ENCODE measurements at regions of chr19 and their contacts with region 1.

Region 1: GRCh38 chr19:53792721-53793433 is 31.2 kb downstream of the NLRP12 start:
- DNase-seq: peak; percentile 54 to 76 (median 67)
- ATAC-seq: peak; percentile 100
- H3K4me3 ChIP-seq: no peak overlapping the region
- H3K4me3 Mint-ChIP-seq: no peak overlapping the region
- H3K27ac ChIP-seq: no peak overlapping the region
- H3K27ac Mint-ChIP-seq: no peak overlapping the region
- H3K4me1 ChIP-seq: no peaks in the 10 kb centered on the region
- H3K4me1 Mint-ChIP-seq: peaks cover 0 to 2% (median 0%) of the 10 kb centered on the region in 7 donors
- H3K27me3 ChIP-seq: no peaks in the 10 kb centered on the region
- H3K27me3 Mint-ChIP-seq: peaks cover 0 to 4% (median 0%) of the 10 kb centered on the region in 5 donors

Region 2: DNA sequence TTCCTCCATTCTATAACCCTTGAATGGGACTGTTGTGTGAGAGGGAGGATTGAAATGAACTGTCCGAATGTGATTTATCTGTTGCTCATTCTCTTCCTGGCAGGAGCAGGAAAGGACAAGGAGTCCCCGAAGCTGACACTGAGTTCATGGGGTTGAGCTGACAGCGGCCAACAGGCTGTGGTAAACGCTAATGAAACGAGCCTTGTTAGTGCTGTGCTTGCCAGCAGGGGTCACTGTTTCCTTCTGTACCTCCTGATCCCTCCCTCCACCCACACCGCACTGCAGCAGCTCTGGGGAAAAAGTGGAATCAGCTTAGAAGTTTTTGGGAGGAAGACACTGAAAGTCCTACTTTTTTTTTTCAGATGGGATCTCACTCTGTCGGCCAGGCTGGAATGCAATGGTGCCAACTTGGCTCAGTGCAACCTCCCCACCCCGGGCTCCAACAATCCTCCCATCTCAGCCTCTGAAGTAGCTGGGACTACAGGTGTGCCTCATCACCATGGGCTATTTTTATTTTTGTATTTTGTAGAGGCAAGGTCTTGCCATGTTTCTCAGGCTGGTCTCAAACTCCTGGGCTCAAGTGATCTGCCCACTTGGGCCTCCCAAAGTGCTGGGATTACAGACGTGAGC is 367.8 kb before region 1 on chr19:
- CTCF ChIA-PET with region 1: interaction called, 3 read pairs
- POLR2A ChIA-PET with region 1: no interaction called
- intact Hi-C with region 1: loop called in 1 of 2 experiments (anchors 1 kb)
- DNase-seq: peak; percentile 31 to 70 (median 54)
- ATAC-seq: peak; percentile 96
- H3K4me3 ChIP-seq: no peak overlapping the region
- H3K4me3 Mint-ChIP-seq: no peak overlapping the region
- H3K27ac ChIP-seq: no peak overlapping the region
- H3K27ac Mint-ChIP-seq: no peak overlapping the region
- H3K4me1 ChIP-seq: no peaks in the 10 kb centered on the region
- H3K4me1 Mint-ChIP-seq: peaks cover 0 to 13% (median 2%) of the 10 kb centered on the region in 7 donors
- H3K27me3 ChIP-seq: no peaks in the 10 kb centered on the region
- H3K27me3 Mint-ChIP-seq: peaks cover 0 to 4% (median 0%) of the 10 kb centered on the region in 5 donors

Region 3: DNA sequence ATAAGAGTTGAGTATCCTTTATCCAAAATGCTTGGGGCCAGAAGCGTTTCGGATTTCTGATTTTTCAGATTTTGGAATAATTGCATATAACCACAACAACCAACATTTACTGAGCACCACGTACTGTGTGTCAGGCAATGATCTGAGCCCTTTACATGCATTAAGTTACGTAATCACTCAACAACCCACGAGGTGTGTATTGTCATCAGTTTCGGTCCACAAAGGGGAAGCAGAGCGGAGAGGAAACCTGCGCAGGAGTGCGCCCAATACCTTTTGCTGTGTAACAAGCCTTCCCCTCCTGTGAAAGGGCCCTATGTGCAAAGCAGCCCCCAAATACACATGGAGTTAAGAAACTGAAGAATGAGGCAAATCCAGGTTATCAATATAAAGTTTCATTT is 52.0 kb after region 1 on chr19:
- CTCF ChIA-PET with region 1: no interaction called
- POLR2A ChIA-PET with region 1: no interaction called
- intact Hi-C with region 1: loop called in 1 of 2 experiments (anchors 1 kb)
- DNase-seq: no peak
- ATAC-seq: peak; percentile 63
- H3K4me3 ChIP-seq: no peak overlapping the region
- H3K4me3 Mint-ChIP-seq: no peak overlapping the region
- H3K27ac ChIP-seq: no peak overlapping the region
- H3K27ac Mint-ChIP-seq: no peak overlapping the region
- H3K4me1 ChIP-seq: peaks cover 0 to 3% of the 10 kb centered on the region in 2 donors
- H3K4me1 Mint-ChIP-seq: peaks cover 0 to 7% (median 5%) of the 10 kb centered on the region in 7 donors
- H3K27me3 ChIP-seq: peaks cover 0 to 4% of the 10 kb centered on the region in 2 donors
- H3K27me3 Mint-ChIP-seq: peaks cover 18 to 30% (median 23%) of the 10 kb centered on the region in 5 donors

Region 4: DNA sequence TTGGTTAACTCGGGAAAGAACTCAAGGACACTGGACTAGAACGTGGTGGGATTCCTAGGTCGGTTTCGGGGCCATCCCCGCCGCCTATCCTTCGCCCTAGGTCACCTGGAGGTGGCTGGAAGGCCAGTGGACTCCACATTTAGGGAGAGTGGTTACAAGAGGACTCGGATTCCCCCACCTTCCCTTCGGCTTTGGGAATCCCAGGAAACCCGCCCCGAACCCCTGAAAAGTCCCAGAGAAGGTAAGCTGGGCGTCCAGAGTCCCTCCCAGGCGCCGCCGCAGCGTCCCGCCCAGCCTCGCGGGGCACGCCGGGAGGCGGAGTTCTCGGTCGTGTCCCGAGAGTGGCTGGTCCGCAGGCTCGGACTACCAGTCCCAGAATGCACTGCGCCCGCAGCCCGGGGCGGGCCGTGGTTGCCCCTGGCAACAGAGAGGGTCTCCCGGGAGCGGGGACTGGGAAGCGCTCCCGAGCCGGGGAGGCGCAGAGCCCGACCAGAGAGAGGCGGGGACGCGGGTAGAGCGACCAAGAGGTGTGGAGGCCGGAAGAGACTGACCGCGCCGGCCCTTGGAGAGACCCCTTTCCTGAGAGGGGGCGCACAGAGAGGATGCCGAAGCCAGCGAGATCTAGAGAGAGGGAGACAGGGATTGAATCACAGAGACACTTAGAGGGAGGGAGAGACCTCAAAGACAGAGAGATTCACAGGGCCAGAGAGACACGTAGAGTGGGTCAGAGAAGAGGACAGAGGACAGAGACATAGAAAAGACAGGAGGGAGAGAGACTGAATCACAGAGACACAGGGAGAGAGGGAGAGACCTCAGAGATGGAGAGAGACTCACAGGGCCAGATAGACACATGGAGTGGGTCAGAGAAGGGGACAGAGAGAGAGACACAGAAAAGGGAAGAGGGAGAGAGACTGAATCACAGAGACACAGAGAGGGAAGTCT is 86.5 kb after region 1 on chr19:
- CTCF ChIA-PET with region 1: no interaction called
- POLR2A ChIA-PET with region 1: no interaction called
- intact Hi-C with region 1: loop called in 1 of 2 experiments (anchors 5 kb)
- DNase-seq: peak; percentile 66 to 88 (median 78)
- ATAC-seq: peak; percentile 83
- H3K4me3 ChIP-seq: peak overlapping the region; percentile 63
- H3K4me3 Mint-ChIP-seq: no peak overlapping the region
- H3K27ac ChIP-seq: peak overlapping the region; percentile 47
- H3K27ac Mint-ChIP-seq: peak overlapping the region in 6 of 9 donors; percentile 56 to 83 (median 68)
- H3K4me1 ChIP-seq: peaks cover 38 to 63% of the 10 kb centered on the region in 2 donors
- H3K4me1 Mint-ChIP-seq: peaks cover 30 to 62% (median 44%) of the 10 kb centered on the region in 7 donors
- H3K27me3 ChIP-seq: peaks cover 0 to 25% of the 10 kb centered on the region in 2 donors
- H3K27me3 Mint-ChIP-seq: peaks cover 10 to 19% (median 17%) of the 10 kb centered on the region in 5 donors

Region 5: DNA sequence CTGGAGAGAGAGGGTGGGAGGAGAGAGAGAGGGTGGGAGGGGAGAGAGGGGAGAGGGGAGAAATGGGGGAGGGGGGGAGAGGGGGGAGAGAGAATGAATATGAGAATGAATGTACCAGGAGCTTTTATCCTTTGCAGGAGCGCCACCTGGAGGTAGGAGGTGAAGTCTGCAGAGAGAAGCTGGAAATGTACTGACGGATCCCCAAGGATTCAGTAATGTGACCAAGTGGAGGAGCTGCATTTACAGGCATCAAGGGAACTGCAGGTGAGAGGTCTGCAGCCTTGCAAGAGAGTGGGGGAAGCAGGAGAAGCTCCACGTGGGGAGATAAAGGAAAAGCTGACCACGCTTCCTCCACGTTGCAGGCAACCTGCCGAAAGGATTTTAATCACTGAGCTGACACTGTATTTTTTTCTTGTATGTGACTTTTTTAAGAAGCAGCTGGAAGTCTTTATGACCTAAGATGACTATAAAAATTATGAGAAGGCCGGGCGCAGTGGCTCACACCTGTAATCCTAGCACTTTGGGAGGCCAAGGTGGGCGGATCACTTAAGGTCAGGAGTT is 237.1 kb after region 1 on chr19:
- CTCF ChIA-PET with region 1: interaction called, 15 read pairs
- POLR2A ChIA-PET with region 1: no interaction called
- intact Hi-C with region 1: loop called in 1 of 2 experiments (anchors 2 kb)
- DNase-seq: peak; percentile 9 to 55 (median 31)
- ATAC-seq: peak; percentile 51
- H3K4me3 ChIP-seq: no peak overlapping the region
- H3K4me3 Mint-ChIP-seq: no peak overlapping the region
- H3K27ac ChIP-seq: no peak overlapping the region
- H3K27ac Mint-ChIP-seq: no peak overlapping the region
- H3K4me1 ChIP-seq: no peaks in the 10 kb centered on the region
- H3K4me1 Mint-ChIP-seq: peaks cover 0 to 8% (median 0%) of the 10 kb centered on the region in 7 donors
- H3K27me3 ChIP-seq: no peaks in the 10 kb centered on the region
- H3K27me3 Mint-ChIP-seq: peaks cover 6 to 38% (median 30%) of the 10 kb centered on the region in 5 donors

Region 6: GRCh38 chr19:54463531-54464043 is 670.7 kb after region 1 on chr19 and contains the start of gene LENG9:
- CTCF ChIA-PET with region 1: no interaction called
- POLR2A ChIA-PET with region 1: no interaction called
- intact Hi-C with region 1: no loop called
- DNase-seq: peak; percentile 73 to 97 (median 87)
- ATAC-seq: peak; percentile 81
- H3K4me3 ChIP-seq: peak within 1 kb of the TSS; percentile 88
- H3K4me3 Mint-ChIP-seq: peak within 1 kb of the TSS; percentile 84 to 95 (median 92)
- H3K27ac ChIP-seq: peak within 1 kb of the TSS; percentile 71
- H3K27ac Mint-ChIP-seq: peak within 1 kb of the TSS; percentile 86 to 98 (median 93)
- H3K4me1 ChIP-seq: peaks cover 17 to 23% of the 10 kb centered on the region in 2 donors
- H3K4me1 Mint-ChIP-seq: peaks cover 16 to 35% (median 33%) of the 10 kb centered on the region in 7 donors
- H3K27me3 ChIP-seq: peaks cover 0 to 3% of the 10 kb centered on the region in 2 donors
- H3K27me3 Mint-ChIP-seq: peaks cover 5 to 23% (median 7%) of the 10 kb centered on the region in 5 donors
- total RNA-seq, gene LENG9: 3.5 to 6.1 (median 4.3) TPM

Measured in naive thymus-derived CD4-positive, alpha-beta T cell (primary cell).